Activated B cell treated with CpG ODN at 0.5 μM for 24 hours (primary cell): ENCODE measurements at regions of chr13 and their contacts with region 1.

Region 1: DNA sequence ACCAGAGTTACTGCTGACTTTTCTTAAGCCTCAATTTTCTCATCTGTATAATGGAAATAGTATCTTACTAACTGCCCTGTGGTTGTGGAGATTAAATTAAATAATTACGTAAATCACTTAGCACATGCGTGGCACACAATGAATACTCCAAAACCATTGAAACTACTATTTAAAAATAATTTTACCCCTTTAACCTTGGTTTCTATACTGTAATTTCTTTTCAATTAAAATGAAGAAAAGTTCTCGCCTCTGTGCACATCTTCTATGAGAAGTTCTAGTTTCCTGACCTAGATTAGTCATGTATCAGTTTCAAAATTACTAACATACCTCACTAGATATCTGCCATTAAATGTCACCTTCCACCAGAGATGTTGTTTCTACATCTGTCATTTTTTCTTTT is 5.7 kb downstream of the SLITRK1 start:
- DNase-seq: no peak
- ATAC-seq: no peak
- H3K4me3 Mint-ChIP-seq: no peak overlapping the region
- H3K27ac Mint-ChIP-seq: no peak overlapping the region
- H3K4me1 Mint-ChIP-seq: no peaks in the 10 kb centered on the region
- H3K27me3 Mint-ChIP-seq: peaks cover 13% of the 10 kb centered on the region
- CTCF ChIP-seq: no peak

Region 2: GRCh38 chr13:83895994-83896580 is 19.5 kb after region 1 on chr13:
- CTCF ChIA-PET with region 1: no interaction called
- POLR2A ChIA-PET with region 1: no interaction called
- intact Hi-C with region 1: loop called (anchors 2 kb)
- DNase-seq: no peak
- ATAC-seq: no peak
- H3K4me3 Mint-ChIP-seq: no peak overlapping the region
- H3K27ac Mint-ChIP-seq: no peak overlapping the region
- H3K4me1 Mint-ChIP-seq: no peaks in the 10 kb centered on the region
- H3K27me3 Mint-ChIP-seq: no peaks in the 10 kb centered on the region
- CTCF ChIP-seq: no peak

Region 3: GRCh38 chr13:84118829-84119409 is 242.4 kb after region 1 on chr13:
- CTCF ChIA-PET with region 1: no interaction called
- POLR2A ChIA-PET with region 1: no interaction called
- intact Hi-C with region 1: no loop called
- DNase-seq: no peak
- ATAC-seq: no peak
- H3K4me3 Mint-ChIP-seq: no peak overlapping the region
- H3K27ac Mint-ChIP-seq: no peak overlapping the region
- H3K4me1 Mint-ChIP-seq: no peaks in the 10 kb centered on the region
- H3K27me3 Mint-ChIP-seq: no peaks in the 10 kb centered on the region
- CTCF ChIP-seq: no peak

Region 4: GRCh38 chr13:85108356-85108755 is 1231.8 kb after region 1 on chr13:
- CTCF ChIA-PET with region 1: no interaction called
- POLR2A ChIA-PET with region 1: no interaction called
- intact Hi-C with region 1: loop called (anchors 5 kb)
- DNase-seq: no peak
- ATAC-seq: no peak
- H3K4me3 Mint-ChIP-seq: no peak overlapping the region
- H3K27ac Mint-ChIP-seq: no peak overlapping the region
- H3K4me1 Mint-ChIP-seq: no peaks in the 10 kb centered on the region
- H3K27me3 Mint-ChIP-seq: no peaks in the 10 kb centered on the region
- CTCF ChIP-seq: no peak

Region 5: GRCh38 chr13:85277748-85278147 is 1401.2 kb after region 1 on chr13:
- CTCF ChIA-PET with region 1: no interaction called
- POLR2A ChIA-PET with region 1: no interaction called
- intact Hi-C with region 1: no loop called
- DNase-seq: no peak
- ATAC-seq: no peak
- H3K4me3 Mint-ChIP-seq: no peak overlapping the region
- H3K27ac Mint-ChIP-seq: no peak overlapping the region
- H3K4me1 Mint-ChIP-seq: no peaks in the 10 kb centered on the region
- H3K27me3 Mint-ChIP-seq: no peaks in the 10 kb centered on the region
- CTCF ChIP-seq: no peak